HEK293 (cell line): ENCODE measurements at regions of chr9 and their contacts with region 1.

Region 1: DNA sequence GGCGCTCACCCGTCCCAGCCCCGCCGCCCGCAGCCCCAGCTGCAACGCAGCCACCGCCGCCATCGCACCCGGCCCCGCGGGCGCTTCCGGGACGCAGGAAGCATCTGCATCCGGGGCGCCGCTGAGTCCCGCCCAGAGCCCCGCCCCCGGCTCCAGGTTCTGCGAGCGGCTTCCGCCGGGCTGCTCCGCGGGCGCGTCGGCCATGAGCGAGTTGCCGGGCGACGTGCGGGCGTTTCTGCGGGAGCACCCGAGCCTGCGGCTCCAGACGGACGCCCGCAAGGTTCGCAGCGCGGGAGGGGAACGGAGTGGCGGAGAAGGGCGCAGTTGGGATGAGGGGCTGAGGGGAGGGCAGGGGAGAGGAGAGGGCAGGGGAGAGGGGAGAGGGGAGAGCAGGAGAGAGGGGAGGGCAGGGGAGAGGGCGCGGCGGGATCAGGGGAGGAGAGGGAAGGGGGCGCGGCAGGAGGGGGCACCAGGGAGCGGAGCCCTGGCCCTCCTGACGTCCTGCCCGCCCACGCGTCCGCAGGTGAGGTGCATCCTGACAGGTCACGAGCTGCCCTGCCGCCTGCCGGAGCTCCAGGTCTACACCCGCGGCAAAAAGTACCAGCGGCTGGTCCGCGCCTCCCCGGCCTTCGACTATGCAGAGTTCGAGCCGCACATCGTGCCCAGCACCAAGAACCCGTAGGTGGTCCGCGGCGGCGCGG is at the starts of genes SURF1 and SURF2:
- H3K4me3 ChIP-seq: peak within 1 kb of the TSS; percentile 83
- H3K27ac ChIP-seq: peak within 1 kb of the TSS; percentile 43; the same call in 1 of the 2 replicates
- H3K4me1 ChIP-seq: no peaks in the 10 kb centered on the region
- CTCF ChIP-seq: no peak; the same call in none of the 2 replicates

Region 2: GRCh38 chr9:133342069-133342406 is 14.5 kb before region 1 on chr9:
- CTCF ChIA-PET with region 1: interaction called, 10 read pairs
- POLR2A ChIA-PET with region 1: interaction called, 89 read pairs
- H3K4me3 ChIP-seq: no peak overlapping the region
- H3K27ac ChIP-seq: no peak overlapping the region
- H3K4me1 ChIP-seq: no peaks in the 10 kb centered on the region
- CTCF ChIP-seq: no peak; the same call in 1 of the 2 replicates

Region 3: GRCh38 chr9:133375724-133376654 is 19.4 kb after region 1 on chr9 and contains the starts of genes STKLD1 and SURF4:
- CTCF ChIA-PET with region 1: interaction called, 8 read pairs
- POLR2A ChIA-PET with region 1: interaction called, 18 read pairs
- H3K4me3 ChIP-seq: peak within 1 kb of the TSS; percentile 57
- H3K27ac ChIP-seq: peak within 1 kb of the TSS; percentile 93
- H3K4me1 ChIP-seq: peaks cover 5% of the 10 kb centered on the region
- CTCF ChIP-seq: no peak

Region 4: GRCh38 chr9:133563001-133563796 is 206.7 kb after region 1 on chr9:
- CTCF ChIA-PET with region 1: no interaction called
- POLR2A ChIA-PET with region 1: no interaction called
- H3K4me3 ChIP-seq: no peak overlapping the region
- H3K27ac ChIP-seq: no peak overlapping the region
- H3K4me1 ChIP-seq: peaks cover 4% of the 10 kb centered on the region
- CTCF ChIP-seq: no peak